Vagina (tissue), 2 donors: ENCODE measurements at regions of chr11 and their contacts with region 1.

Region 1: DNA sequence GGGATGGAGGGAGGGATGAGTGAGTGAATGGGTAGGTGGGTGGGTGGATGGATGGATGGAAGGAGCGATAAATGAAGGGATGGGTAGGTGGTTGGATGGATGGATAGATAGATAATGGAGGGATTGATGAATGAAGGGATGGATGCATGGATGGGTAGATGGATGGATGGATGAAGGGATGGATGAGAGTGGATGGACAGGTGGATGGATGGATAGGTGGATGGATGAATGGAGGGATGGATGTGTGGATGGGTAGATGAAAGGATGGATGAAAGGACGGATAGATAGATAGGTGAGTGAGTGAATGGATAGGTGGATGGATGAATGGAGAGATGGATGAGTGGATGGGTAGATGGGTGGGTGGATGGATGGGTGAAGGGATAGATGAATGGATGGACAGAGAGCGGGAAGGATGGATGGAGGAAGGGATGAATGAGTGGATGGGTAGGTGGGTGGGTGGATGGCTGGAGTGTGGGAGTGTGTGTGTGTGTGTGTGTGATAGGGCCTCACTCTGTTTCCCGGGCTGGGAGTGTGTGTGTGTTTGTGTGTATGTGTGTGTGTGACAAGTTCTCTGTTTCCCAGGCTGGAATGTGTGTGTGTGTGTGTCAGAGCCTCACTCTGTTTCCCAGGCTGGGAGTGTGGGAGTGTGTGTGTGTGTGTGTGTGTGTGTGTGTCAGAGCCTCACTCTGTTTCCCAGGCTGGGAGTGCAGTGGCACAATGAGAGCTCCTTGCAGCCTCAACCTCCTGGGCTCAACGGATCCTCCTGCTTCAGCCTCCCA is 2.1 kb upstream of the PRR33 start:
- DNase-seq: no peak
- H3K4me3 ChIP-seq: no peak overlapping the region
- H3K27ac ChIP-seq: no peak overlapping the region
- H3K4me1 ChIP-seq: peaks cover 13% of the 10 kb centered on the region
- H3K27me3 ChIP-seq: no peaks in the 10 kb centered on the region
- CTCF ChIP-seq: no peak
- POLR2A ChIP-seq: no peak

Region 2: DNA sequence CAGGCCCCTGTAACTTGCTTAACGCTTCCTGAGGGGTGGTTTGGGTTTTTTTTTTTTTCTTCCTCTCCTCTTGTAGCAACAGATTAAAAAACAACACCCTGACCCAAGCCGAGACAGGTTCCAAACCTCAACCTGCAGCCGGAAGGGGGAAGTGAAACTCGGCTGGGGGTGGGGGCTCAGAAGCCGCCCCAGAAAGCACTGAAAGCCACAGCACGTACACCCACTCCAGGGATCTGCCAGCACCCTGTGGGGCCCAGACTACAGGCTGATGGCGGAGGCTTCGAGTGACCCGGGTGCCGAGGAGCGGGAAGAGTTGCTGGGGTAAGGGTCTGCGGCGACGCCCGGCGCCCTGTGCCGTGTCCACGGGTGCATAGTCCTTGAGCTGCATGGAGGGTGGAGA is 40.9 kb before region 1 on chr11 and contains the start of gene LSP1:
- intact Hi-C with region 1: no loop called
- DNase-seq: no peak
- H3K4me3 ChIP-seq: peak within 1 kb of the TSS; percentile 13 to 32
- H3K27ac ChIP-seq: no peak within 1 kb of the TSS
- H3K4me1 ChIP-seq: no peaks in the 10 kb centered on the region
- H3K27me3 ChIP-seq: no peaks in the 10 kb centered on the region
- CTCF ChIP-seq: no peak
- POLR2A ChIP-seq: no peak
- total RNA-seq, gene LSP1: 32.7 TPM

Region 3: DNA sequence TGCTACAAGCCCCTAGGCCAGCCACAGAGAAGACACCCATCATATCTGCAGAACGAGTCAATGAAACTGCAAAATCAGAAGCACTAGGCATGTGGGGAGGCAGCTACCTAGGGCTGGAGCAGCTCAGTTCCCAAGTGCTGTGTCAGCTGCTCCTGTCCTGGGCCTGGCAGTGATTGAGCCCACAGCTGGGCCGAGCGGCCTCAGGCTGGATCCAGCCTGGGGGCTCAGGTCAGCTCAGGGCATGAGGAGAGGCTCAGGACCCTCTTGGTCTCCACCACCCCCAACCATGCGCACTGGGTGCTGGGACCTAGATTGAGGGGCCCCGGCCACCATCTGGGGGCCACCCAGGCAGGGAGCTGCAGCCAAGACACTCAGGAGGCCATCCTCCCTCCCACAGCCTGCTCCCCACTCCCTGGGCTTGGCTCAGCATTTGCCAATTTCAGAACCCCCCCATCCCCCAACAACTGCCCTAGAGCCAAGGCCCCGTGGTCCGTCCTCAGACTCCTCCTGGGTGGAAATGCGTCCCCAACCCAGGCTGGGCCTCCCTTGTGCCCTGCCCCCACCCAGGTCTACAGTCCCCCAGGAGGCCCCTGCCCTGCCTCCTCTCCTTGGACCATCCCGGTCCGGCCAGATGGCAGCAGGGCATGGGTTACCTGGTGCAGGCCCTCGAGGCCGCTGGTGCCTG is 23.4 kb after region 1 on chr11:
- intact Hi-C with region 1: loop called (anchors 1 kb)
- DNase-seq: peak in 1 of 2 donors; percentile 87
- H3K4me3 ChIP-seq: no peak overlapping the region
- H3K27ac ChIP-seq: peak overlapping the region; percentile 31
- H3K4me1 ChIP-seq: peaks cover 33% of the 10 kb centered on the region
- H3K27me3 ChIP-seq: no peaks in the 10 kb centered on the region
- CTCF ChIP-seq: no peak
- POLR2A ChIP-seq: no peak